ENCODE measurements at regions of chr2 and their contacts with region 1.

Region 1: GRCh38 chr2:7567646-7568045 is 650.4 kb downstream of the RNF144A start:
- DNase-seq: peak; percentile 78
- H3K4me3 Mint-ChIP-seq: peak overlapping the region; percentile 23
- H3K27ac Mint-ChIP-seq: peak overlapping the region; percentile 84
- H3K4me1 Mint-ChIP-seq: peaks cover 64% of the 10 kb centered on the region
- H3K27me3 Mint-ChIP-seq: no peaks in the 10 kb centered on the region

Region 2: GRCh38 chr2:7467782-7468447 is 99.7 kb before region 1 on chr2:
- CTCF ChIA-PET with region 1: no interaction called
- POLR2A ChIA-PET with region 1: no interaction called
- intact Hi-C with region 1: loop called (anchors 5 kb)
- DNase-seq: peak; percentile 75
- H3K4me3 Mint-ChIP-seq: peak overlapping the region; percentile 17
- H3K27ac Mint-ChIP-seq: peak overlapping the region; percentile 95
- H3K4me1 Mint-ChIP-seq: peaks cover 41% of the 10 kb centered on the region
- H3K27me3 Mint-ChIP-seq: peaks cover 7% of the 10 kb centered on the region

Region 3: GRCh38 chr2:7552825-7553570 is 14.6 kb before region 1 on chr2:
- CTCF ChIA-PET with region 1: interaction called, 4 read pairs
- POLR2A ChIA-PET with region 1: no interaction called
- intact Hi-C with region 1: loop called (anchors 2 kb)
- DNase-seq: peak; percentile 14
- H3K4me3 Mint-ChIP-seq: peak overlapping the region; percentile 20
- H3K27ac Mint-ChIP-seq: peak overlapping the region; percentile 57
- H3K4me1 Mint-ChIP-seq: peaks cover 24% of the 10 kb centered on the region
- H3K27me3 Mint-ChIP-seq: no peaks in the 10 kb centered on the region

Region 4: DNA sequence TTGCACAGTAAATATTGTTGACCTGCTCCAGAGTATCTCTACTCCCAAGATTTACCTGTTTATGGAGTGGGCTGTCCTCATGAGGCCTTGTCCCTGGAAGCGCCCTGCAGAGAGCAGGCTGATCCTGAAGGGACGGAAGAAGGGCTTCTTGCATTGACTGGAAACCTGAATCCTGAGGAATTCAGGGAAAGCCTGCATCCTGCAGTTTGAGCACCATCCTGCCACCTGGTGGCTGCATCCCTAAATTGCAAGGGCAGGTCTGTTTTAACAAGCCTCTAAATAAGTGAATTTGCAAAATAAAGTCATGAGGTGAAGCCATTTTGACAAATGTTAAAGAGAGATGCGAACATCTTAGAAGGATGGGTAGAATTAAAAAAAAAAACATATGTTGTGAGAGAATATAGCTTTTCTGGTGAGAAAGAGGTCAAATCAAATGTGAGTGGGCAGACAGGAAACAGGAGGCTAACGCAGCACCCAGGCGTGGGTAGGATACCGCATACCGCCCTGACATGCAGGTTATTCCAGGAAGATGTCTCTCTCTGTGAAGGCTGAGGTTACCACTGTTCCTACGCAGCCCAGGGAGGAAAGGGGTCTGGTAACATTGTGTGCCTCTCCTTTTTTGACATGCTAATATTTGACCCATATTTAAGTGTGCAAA is 104.5 kb after region 1 on chr2:
- CTCF ChIA-PET with region 1: interaction called, 13 read pairs
- POLR2A ChIA-PET with region 1: no interaction called
- intact Hi-C with region 1: loop called (anchors 1 kb)
- DNase-seq: peak; percentile 78
- H3K4me3 Mint-ChIP-seq: peak overlapping the region; percentile 45
- H3K27ac Mint-ChIP-seq: peak overlapping the region; percentile 88
- H3K4me1 Mint-ChIP-seq: peaks cover 43% of the 10 kb centered on the region
- H3K27me3 Mint-ChIP-seq: no peaks in the 10 kb centered on the region

Region 5: DNA sequence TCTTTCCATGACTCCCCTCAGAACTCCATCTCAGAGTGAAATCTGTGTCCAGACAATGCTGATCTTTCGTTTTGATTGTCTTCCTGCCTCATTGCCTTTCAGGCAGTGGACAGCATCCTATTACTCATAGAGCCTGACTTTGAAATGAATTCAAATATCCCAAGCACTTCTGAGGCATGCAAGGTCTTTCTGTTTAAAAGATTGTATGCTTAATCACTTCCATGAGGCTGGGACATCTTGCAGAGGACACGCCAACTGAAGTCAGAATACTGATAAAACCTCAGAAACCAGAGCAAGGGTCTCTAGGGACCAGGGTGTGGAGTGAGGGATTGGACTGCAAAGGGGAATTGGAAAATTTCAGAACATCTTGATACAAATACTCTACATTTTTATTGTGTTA is 277.7 kb after region 1 on chr2:
- CTCF ChIA-PET with region 1: no interaction called
- POLR2A ChIA-PET with region 1: no interaction called
- intact Hi-C with region 1: loop called (anchors 5 kb)
- DNase-seq: no peak
- H3K4me3 Mint-ChIP-seq: no peak overlapping the region
- H3K27ac Mint-ChIP-seq: no peak overlapping the region
- H3K4me1 Mint-ChIP-seq: peaks cover 36% of the 10 kb centered on the region
- H3K27me3 Mint-ChIP-seq: peaks cover 7% of the 10 kb centered on the region